ENCODE measurements at regions of chr6 and their contacts with region 1.

Region 1: DNA sequence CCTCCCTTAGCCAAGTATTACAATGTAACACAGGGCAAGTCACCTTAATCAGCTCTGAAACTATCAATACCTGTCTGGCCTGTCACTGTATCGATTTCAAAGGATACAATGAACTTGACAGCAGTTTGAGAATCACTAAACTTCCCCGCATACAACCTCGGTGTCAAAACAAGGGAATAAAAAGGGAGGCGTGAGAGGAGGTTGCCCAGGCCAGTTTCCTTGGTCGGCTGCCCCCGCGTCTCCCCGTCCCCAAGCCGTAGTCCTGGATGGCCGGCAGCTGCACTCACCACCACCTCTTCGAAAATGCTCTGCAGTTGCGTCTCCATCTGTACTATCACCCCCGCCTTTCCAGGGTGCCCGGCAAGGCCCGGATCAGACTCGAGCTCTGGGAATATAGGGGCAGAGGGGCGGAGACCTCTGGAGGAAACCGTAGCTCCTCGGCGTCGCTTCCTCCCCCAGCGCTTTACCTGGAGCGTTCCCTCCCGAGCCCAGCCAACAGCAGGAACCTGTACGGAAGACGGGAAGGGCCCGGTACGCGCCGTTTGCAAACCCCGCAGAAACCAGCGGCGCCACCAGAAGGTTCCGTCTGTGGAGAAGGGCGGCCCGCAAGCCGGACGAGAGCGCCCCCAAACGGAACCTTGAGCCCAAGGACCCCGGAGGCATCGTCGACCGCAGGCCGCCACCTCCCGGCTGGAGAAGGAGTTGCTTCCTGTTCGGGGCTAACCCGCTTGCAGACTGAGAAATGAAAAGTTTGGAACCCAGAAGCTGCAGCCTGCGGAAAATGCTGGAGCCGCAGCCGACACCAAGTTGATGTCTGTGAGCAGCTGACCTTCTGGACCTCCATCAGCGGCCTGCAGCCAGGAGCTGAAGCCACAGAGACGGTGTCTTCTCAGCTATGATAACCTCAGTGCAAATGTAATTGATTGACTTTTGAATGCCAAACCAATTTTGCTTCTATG is at the start of gene MED23:
- DNase-seq: peak; percentile 67 to 96
- H3K4me3 ChIP-seq: peak within 1 kb of the TSS; percentile 86 to 89
- H3K27ac ChIP-seq: peak within 1 kb of the TSS; percentile 68 to 72
- H3K4me1 ChIP-seq: peaks cover 0 to 20% of the 10 kb centered on the region in 2 donors
- H3K27me3 ChIP-seq: no peaks in the 10 kb centered on the region
- CTCF ChIP-seq: peak; percentile 81 to 99 (median 99)
- total RNA-seq, gene MED23: 20.4 TPM

Region 2: GRCh38 chr6:131807644-131808459 is 179.8 kb after region 1 on chr6 and contains the start of gene ENPP1:
- intact Hi-C with region 1: loop called (anchors 5 kb)
- DNase-seq: peak; percentile 53 to 93
- H3K4me3 ChIP-seq: peak within 1 kb of the TSS; percentile 65 to 67
- H3K27ac ChIP-seq: peak within 1 kb of the TSS; percentile 84 to 86
- H3K4me1 ChIP-seq: peaks cover 8 to 27% of the 10 kb centered on the region in 2 donors
- H3K27me3 ChIP-seq: no peaks in the 10 kb centered on the region
- CTCF ChIP-seq: peak; percentile 37 to 51 (median 49)
- total RNA-seq, gene ENPP1: 4.5 TPM

Region 3: DNA sequence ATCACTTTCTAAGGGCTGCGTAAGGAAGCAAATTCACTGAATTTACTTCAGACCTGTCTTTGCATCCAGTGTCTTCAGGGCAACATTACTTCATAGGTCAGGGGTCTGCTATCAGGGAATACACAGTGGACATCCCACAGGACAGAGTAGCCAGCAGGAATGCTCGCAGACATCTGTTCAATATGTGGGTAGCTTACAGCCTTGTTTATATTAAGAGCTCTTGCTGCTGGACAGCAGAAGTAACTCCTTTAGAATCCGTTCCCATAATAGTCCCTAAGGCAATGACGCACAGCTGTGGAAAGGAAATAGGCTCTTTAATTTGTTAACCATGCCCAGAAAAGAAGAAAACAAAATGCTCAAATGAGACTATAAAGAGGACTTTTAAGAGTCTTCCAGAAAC is 574.6 kb after region 1 on chr6:
- intact Hi-C with region 1: no loop called
- DNase-seq: no peak
- H3K4me3 ChIP-seq: no peak overlapping the region
- H3K27ac ChIP-seq: peak overlapping the region; percentile 40 to 67
- H3K4me1 ChIP-seq: peaks cover 0 to 8% of the 10 kb centered on the region in 2 donors
- H3K27me3 ChIP-seq: no peaks in the 10 kb centered on the region
- CTCF ChIP-seq: no peak

Region 4: GRCh38 chr6:132490024-132490423 is 862.0 kb after region 1 on chr6:
- intact Hi-C with region 1: loop called (anchors 10 kb)
- DNase-seq: peak in 1 of 2 donors; percentile 74
- H3K4me3 ChIP-seq: peak overlapping the region in 1 of 2 donors; percentile 43
- H3K27ac ChIP-seq: peak overlapping the region; percentile 70 to 77
- H3K4me1 ChIP-seq: peaks cover 8 to 28% of the 10 kb centered on the region in 2 donors
- H3K27me3 ChIP-seq: no peaks in the 10 kb centered on the region
- CTCF ChIP-seq: no peak

Measured in ascending aorta (tissue), 2 donors.